Mammary epithelial cell (primary cell): ENCODE measurements at regions of chr12 and their contacts with region 1.

Region 1: DNA sequence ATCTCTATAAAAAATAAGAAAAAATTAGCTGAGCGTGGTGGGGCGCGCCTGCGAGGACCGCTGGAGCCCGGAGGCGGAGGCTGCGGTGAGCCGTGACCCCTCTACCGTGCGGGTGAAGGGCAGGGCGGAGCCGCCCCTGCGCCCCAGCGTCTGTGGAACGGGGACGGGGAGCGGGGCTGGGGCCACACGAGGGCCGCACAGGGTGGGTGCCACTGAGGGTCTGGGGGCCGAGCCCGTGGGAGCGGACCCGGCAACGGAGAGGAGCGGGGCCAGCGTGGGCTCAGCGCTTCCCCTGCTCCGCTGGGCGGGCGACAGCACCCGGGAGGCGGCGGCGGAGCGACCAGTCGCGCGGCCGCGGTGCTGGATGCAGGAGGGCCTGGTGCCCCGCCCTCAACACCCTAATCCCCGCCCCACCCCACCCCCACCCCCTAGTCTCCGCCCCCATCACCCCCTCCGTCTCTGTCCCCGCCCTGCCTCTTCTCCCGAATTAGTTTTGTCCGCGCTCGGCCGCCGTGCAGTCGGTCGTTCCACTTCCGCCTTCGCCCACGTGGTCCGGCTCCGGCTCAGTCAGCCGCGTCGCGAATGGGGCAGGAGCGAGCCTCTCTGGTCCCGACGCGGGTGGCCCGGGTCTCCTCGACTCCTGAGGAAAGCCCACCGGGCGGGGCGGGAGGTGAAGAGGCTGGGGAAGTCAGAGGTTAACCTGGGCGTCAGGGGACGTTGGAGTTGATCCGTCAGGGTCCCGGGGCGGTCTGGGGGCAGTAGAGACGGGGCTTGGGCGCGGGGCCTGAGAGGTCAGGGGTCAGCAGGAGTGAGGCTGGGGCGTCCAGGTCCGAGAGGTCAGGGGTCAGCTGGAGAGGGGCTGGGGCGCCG is at the start of gene PUS1:
- DNase-seq: peak; percentile 91
- H3K4me3 ChIP-seq: peak within 1 kb of the TSS; percentile 98 to 99 (median 99)
- H3K27ac ChIP-seq: peak within 1 kb of the TSS; percentile 35
- H3K4me1 ChIP-seq: peaks cover 12% of the 10 kb centered on the region
- H3K27me3 ChIP-seq: no peaks in the 10 kb centered on the region
- CTCF ChIP-seq: no peak
- total RNA-seq, gene PUS1: 7.3 to 51.3 TPM

Region 2: GRCh38 chr12:131872185-131873051 is 56.5 kb before region 1 on chr12:
- CTCF ChIA-PET with region 1: no interaction called
- dilution Hi-C with region 1: loop called (anchors 5 kb)
- in situ Hi-C with region 1: no loop called
- intact Hi-C with region 1: no loop called
- DNase-seq: peak; percentile 94
- H3K4me3 ChIP-seq: no peak overlapping the region
- H3K27ac ChIP-seq: no peak overlapping the region
- H3K4me1 ChIP-seq: peaks cover 19% of the 10 kb centered on the region
- H3K27me3 ChIP-seq: no peaks in the 10 kb centered on the region
- CTCF ChIP-seq: no peak

Region 3: DNA sequence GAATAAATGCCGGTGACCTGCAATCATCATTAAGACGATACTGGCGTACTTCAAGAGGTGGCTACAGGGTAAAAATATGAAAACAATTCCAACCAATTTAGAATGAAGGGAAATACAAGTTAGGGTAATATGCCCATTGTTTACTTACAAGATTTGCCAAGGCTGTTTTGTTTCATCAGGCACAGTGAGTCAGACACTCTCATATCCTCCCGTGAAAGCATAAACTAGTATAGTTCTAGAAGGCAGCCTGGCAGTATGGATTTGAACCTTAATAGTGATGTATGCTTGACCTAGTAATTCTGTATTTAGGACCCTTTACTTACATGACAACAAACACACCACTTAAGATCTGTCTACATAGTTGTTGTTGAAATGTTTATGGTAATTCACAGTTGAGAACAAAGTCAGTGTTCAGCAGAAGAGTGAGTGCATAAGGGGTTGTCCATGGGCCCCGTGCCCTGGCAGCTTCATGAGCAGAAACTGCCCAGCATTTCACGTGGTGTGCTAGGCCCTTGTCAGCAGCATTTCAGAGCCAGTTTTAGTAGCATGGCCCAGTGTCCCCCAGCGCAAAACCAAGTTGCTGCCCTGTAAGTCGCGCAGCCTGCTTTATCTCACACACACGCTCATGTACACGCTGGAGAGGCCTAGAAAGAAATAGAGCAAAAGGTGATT is 101.6 kb after region 1 on chr12:
- CTCF ChIA-PET with region 1: no interaction called
- dilution Hi-C with region 1: loop called (anchors 10 kb)
- in situ Hi-C with region 1: no loop called
- intact Hi-C with region 1: no loop called
- DNase-seq: no peak
- H3K4me3 ChIP-seq: no peak overlapping the region
- H3K27ac ChIP-seq: no peak overlapping the region
- H3K4me1 ChIP-seq: no peaks in the 10 kb centered on the region
- H3K27me3 ChIP-seq: no peaks in the 10 kb centered on the region
- CTCF ChIP-seq: no peak